ENCODE measurements at regions of chr15 and their contacts with region 1.

Region 1: DNA sequence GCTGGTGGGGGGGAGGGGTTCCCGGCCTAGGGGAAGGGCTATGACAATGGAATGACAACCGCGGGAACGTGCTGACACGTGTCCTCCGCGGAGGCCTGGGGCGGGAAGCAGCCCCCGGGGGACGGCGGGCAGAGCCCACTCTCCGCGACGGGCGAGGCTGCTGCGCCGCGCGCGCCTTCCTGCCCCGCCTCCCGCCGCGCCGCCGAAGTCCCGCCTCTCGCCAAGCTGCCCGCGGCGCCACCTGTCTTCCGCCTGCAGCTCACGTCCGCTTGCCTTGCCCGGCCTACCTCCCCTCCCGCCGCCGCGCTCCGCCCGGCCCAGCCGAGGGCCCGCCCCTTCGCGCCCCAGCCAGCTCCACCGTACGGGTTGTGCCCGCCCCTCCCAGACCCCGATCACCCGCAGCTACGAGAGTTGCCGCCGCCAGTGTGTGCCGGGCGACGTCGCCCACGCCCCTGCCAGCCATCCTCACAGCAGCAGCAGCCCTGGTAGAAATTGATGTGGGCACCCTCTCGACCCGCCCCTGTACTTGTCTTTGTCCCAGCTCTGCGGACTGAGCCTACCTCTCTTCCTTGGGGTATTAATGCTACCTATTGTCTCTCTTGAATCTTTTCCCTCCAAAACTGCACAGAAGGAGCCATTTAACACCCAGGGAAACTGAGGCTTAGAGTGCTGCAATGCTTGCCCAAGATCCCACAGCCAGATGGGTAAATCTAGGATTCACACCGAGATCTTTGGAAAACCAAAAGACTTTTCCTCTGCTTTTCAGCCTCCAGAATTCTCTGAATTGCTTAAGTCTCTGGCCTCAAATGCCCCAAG is at the start of gene PARP16:
- DNase-seq: peak; percentile 77 to 95 (median 87)
- ATAC-seq: peak; percentile 95 to 97 (median 95)
- H3K4me3 ChIP-seq: peak within 1 kb of the TSS; percentile 86 to 91
- H3K4me3 Mint-ChIP-seq: peak within 1 kb of the TSS; percentile 84 to 88 (median 86)
- H3K27ac ChIP-seq: peak within 1 kb of the TSS; percentile 80
- H3K27ac Mint-ChIP-seq: peak within 1 kb of the TSS; percentile 93
- H3K4me1 ChIP-seq: peaks cover 9 to 34% of the 10 kb centered on the region in 2 experiments
- H3K4me1 Mint-ChIP-seq: peaks cover 42 to 46% (median 43%) of the 10 kb centered on the region in 3 donors
- H3K27me3 ChIP-seq: no peaks in the 10 kb centered on the region
- H3K27me3 Mint-ChIP-seq: no peaks in the 10 kb centered on the region
- total RNA-seq, gene PARP16: 16.2 to 23.3 (median 18.5) TPM

Region 2: DNA sequence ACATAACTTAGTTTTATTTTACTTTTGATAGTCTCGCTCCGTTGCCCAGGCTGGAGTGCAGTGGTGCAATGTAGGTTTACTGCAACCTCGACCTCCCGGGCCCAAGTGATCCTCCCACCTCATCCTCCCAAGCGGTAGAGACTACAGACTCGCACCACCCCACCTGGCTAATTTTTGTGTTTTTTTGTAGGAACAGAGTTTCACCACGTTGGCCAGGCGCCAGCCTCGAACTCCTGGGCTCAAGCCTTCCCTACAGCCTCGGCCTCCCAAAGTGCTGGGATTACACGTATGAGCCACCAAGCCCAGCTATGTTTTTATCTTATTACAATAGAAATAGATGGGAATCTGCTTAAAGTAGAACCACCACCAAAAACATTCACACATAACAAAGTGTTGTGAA is 11.8 kb after region 1 on chr15:
- CTCF ChIA-PET with region 1: interaction called, 6 to 13 read pairs
- POLR2A ChIA-PET with region 1: interaction called, 5 to 42 read pairs
- DNase-seq: no peak
- ATAC-seq: no peak
- H3K4me3 ChIP-seq: peak overlapping the region in 1 of 2 donors; percentile 42
- H3K4me3 Mint-ChIP-seq: peak overlapping the region; percentile 70 to 92 (median 82)
- H3K27ac ChIP-seq: peak overlapping the region; percentile 69
- H3K27ac Mint-ChIP-seq: peak overlapping the region; percentile 85 to 94
- H3K4me1 ChIP-seq: peaks cover 9 to 57% of the 10 kb centered on the region in 2 experiments
- H3K4me1 Mint-ChIP-seq: peaks cover 28 to 48% (median 38%) of the 10 kb centered on the region in 3 donors
- H3K27me3 ChIP-seq: no peaks in the 10 kb centered on the region
- H3K27me3 Mint-ChIP-seq: no peaks in the 10 kb centered on the region

Region 3: GRCh38 chr15:65304389-65305144 is 17.7 kb after region 1 on chr15 and contains the start of gene RNU5B-1:
- CTCF ChIA-PET with region 1: interaction called in 1 of 2 experiments, 13 read pairs
- POLR2A ChIA-PET with region 1: interaction called in 1 of 2 experiments, 42 read pairs
- DNase-seq: peak; percentile 37 to 92 (median 67)
- ATAC-seq: peak; percentile 80 to 87 (median 81)
- H3K4me3 ChIP-seq: peak within 1 kb of the TSS; percentile 60 to 67
- H3K4me3 Mint-ChIP-seq: peak within 1 kb of the TSS; percentile 92 to 94 (median 93)
- H3K27ac ChIP-seq: peak within 1 kb of the TSS; percentile 99
- H3K27ac Mint-ChIP-seq: peak within 1 kb of the TSS; percentile 98 to 99
- H3K4me1 ChIP-seq: peaks cover 13 to 28% of the 10 kb centered on the region in 2 experiments
- H3K4me1 Mint-ChIP-seq: peaks cover 25 to 32% (median 32%) of the 10 kb centered on the region in 3 donors
- H3K27me3 ChIP-seq: no peaks in the 10 kb centered on the region
- H3K27me3 Mint-ChIP-seq: no peaks in the 10 kb centered on the region
- total RNA-seq, gene RNU5B-1: 27.0 to 34.4 (median 32.6) TPM in 3 of 5 donors, not detected in the others

Region 4: DNA sequence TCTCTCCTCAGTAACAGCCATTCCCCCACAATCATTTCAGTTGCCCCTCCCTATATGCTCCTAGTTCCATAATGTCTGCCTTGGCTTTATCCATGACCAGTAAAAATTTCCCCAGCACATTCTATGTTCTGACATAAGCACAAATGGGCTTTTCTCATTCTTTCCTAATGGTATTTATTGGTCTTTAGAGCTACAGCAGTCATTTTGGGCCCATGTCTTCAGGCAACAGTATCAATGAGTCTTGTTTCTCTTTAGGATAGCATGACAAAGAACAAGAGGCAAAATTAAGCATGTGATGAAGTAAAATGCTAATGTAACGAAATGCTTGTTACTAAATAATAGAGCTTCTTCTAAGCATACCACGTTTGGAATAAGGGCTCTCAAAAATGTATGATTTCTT is 222.4 kb after region 1 on chr15:
- CTCF ChIA-PET with region 1: no interaction called
- POLR2A ChIA-PET with region 1: interaction called in 1 of 2 experiments, 12 read pairs
- DNase-seq: no peak
- ATAC-seq: no peak
- H3K4me3 ChIP-seq: no peak overlapping the region
- H3K4me3 Mint-ChIP-seq: no peak overlapping the region
- H3K27ac ChIP-seq: no peak overlapping the region
- H3K27ac Mint-ChIP-seq: peak overlapping the region in 1 of 2 donors; percentile 19
- H3K4me1 ChIP-seq: peaks cover 2 to 5% of the 10 kb centered on the region in 2 experiments
- H3K4me1 Mint-ChIP-seq: peaks cover 28 to 48% (median 38%) of the 10 kb centered on the region in 3 donors
- H3K27me3 ChIP-seq: no peaks in the 10 kb centered on the region
- H3K27me3 Mint-ChIP-seq: no peaks in the 10 kb centered on the region